Adrenal gland (tissue), 19 donors: ENCODE measurements at regions of chr4 and their contacts with region 1.

Region 1: GRCh38 chr4:124105212-124105611 is 607.3 kb downstream of the ANKRD50 start:
- DNase-seq: no peak
- H3K4me3 ChIP-seq: no peak overlapping the region
- H3K27ac ChIP-seq: no peak overlapping the region
- H3K4me1 ChIP-seq: no peaks in the 10 kb centered on the region
- H3K27me3 ChIP-seq: no peaks in the 10 kb centered on the region
- CTCF ChIP-seq: no peak
- POLR2A ChIP-seq: no peak

Region 2: GRCh38 chr4:123750044-123750443 is 355.2 kb before region 1 on chr4:
- intact Hi-C with region 1: loop called in 1 of 2 experiments (anchors 10 kb)
- DNase-seq: no peak
- H3K4me3 ChIP-seq: no peak overlapping the region
- H3K27ac ChIP-seq: peak overlapping the region in 2 of 5 donors; percentile 50 to 64
- H3K4me1 ChIP-seq: peaks cover 0 to 6% of the 10 kb centered on the region in 2 donors
- H3K27me3 ChIP-seq: no peaks in the 10 kb centered on the region
- CTCF ChIP-seq: no peak
- POLR2A ChIP-seq: no peak

Region 3: DNA sequence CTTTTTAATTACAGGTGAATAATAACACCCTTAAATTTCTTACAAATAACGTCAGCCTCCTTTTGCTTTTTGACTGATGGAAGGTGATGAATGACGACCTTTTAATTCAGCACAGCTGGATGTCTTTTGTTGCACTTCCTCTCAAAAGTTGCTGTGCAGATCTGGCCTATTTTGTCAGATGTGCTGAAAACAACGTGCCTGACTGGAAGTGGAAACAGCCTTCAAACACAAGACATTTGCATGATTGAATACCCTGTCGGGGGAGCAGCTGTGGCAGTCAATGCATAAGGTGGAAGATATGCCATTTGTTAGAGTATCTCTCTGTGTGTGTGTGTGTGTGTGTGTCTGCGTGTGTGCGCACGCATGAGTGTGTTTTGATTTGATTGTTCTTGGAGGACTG is 128.9 kb before region 1 on chr4:
- intact Hi-C with region 1: no loop called
- DNase-seq: peak in 1 of 7 donors; percentile 53
- H3K4me3 ChIP-seq: no peak overlapping the region
- H3K27ac ChIP-seq: peak overlapping the region in 1 of 5 donors; percentile 30
- H3K4me1 ChIP-seq: peaks cover 0 to 10% of the 10 kb centered on the region in 2 donors
- H3K27me3 ChIP-seq: no peaks in the 10 kb centered on the region
- CTCF ChIP-seq: no peak
- POLR2A ChIP-seq: no peak